ENCODE measurements at regions of chr7 and their contacts with region 1.

Region 1: GRCh38 chr7:94059746-94060145 is 55.6 kb upstream of the BET1 start:
- DNase-seq: no peak
- ATAC-seq: no peak
- H3K4me3 ChIP-seq: no peak overlapping the region
- H3K27ac ChIP-seq: no peak overlapping the region
- H3K4me1 ChIP-seq: no peaks in the 10 kb centered on the region
- H3K27me3 ChIP-seq: peaks cover 1 to 11% (median 4%) of the 10 kb centered on the region in 3 donors
- CTCF ChIP-seq: no peak

Region 2: GRCh38 chr7:93890464-93891068 is 169.2 kb before region 1 on chr7 and contains the start of gene TFPI2:
- intact Hi-C with region 1: loop called in 1 of 2 experiments (anchors 10 kb)
- DNase-seq: peak in 1 of 2 donors; percentile 38
- ATAC-seq: peak in 2 of 4 donors; percentile 33 to 35
- H3K4me3 ChIP-seq: peak within 1 kb of the TSS; percentile 62
- H3K27ac ChIP-seq: no peak within 1 kb of the TSS
- H3K4me1 ChIP-seq: no peaks in the 10 kb centered on the region
- H3K27me3 ChIP-seq: peaks cover 0 to 14% (median 0%) of the 10 kb centered on the region in 3 donors
- CTCF ChIP-seq: no peak
- total RNA-seq, gene TFPI2: 0.79 to 7.5 (median 2.4) TPM

Region 3: DNA sequence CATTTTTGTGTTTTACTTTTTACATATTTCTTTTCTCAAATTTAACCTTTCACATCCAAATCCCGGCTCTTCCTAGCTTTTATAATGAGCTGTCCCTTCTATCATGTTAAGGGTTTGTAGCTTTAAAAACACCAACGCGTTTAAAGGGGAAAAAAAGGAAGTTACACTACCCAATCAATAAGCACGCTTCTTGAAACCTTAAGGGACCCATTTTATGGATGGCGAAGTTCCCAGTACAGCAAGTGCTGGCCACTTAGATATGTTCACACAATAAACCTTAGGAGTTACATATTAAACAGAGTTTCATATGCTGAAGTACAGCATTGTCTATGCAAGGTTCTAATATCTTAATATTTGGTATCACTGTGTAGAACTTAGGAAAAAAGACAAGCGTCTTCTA is 136.4 kb before region 1 on chr7:
- intact Hi-C with region 1: no loop called
- DNase-seq: no peak
- ATAC-seq: no peak
- H3K4me3 ChIP-seq: peak overlapping the region; percentile 63
- H3K27ac ChIP-seq: peak overlapping the region; percentile 69
- H3K4me1 ChIP-seq: no peaks in the 10 kb centered on the region
- H3K27me3 ChIP-seq: peaks cover 0 to 8% (median 0%) of the 10 kb centered on the region in 3 donors
- CTCF ChIP-seq: no peak

Region 4: GRCh38 chr7:94145602-94146001 is 85.9 kb after region 1 on chr7:
- intact Hi-C with region 1: no loop called
- DNase-seq: no peak
- ATAC-seq: no peak
- H3K4me3 ChIP-seq: no peak overlapping the region
- H3K27ac ChIP-seq: no peak overlapping the region
- H3K4me1 ChIP-seq: no peaks in the 10 kb centered on the region
- H3K27me3 ChIP-seq: no peaks in the 10 kb centered on the region
- CTCF ChIP-seq: no peak

Region 5: GRCh38 chr7:94212160-94212559 is 152.4 kb after region 1 on chr7:
- intact Hi-C with region 1: no loop called
- DNase-seq: no peak
- ATAC-seq: no peak
- H3K4me3 ChIP-seq: no peak overlapping the region
- H3K27ac ChIP-seq: no peak overlapping the region
- H3K4me1 ChIP-seq: no peaks in the 10 kb centered on the region
- H3K27me3 ChIP-seq: no peaks in the 10 kb centered on the region
- CTCF ChIP-seq: no peak